ENCODE measurements at regions of chr2 and their contacts with region 1.

Region 1: GRCh38 chr2:54522624-54523281 is 66.6 kb downstream of the SPTBN1 start:
- DNase-seq: peak; percentile 72
- H3K4me3 ChIP-seq: no peak overlapping the region
- H3K27ac ChIP-seq: peak overlapping the region; percentile 49
- H3K4me1 ChIP-seq: peaks cover 46% of the 10 kb centered on the region
- H3K27me3 ChIP-seq: no peaks in the 10 kb centered on the region
- CTCF ChIP-seq: peak; percentile 73 to 78

Region 2: GRCh38 chr2:54106631-54107454 is 415.9 kb before region 1 on chr2:
- CTCF ChIA-PET with region 1: interaction called, 9 read pairs
- dilution Hi-C with region 1: no loop called
- in situ Hi-C with region 1: loop called in 1 of 2 experiments (anchors 25 kb)
- intact Hi-C with region 1: loop called (anchors 2 kb)
- DNase-seq: peak; percentile 43
- H3K4me3 ChIP-seq: no peak overlapping the region
- H3K27ac ChIP-seq: no peak overlapping the region
- H3K4me1 ChIP-seq: peaks cover 33% of the 10 kb centered on the region
- H3K27me3 ChIP-seq: no peaks in the 10 kb centered on the region
- CTCF ChIP-seq: peak; percentile 84 to 90

Region 3: GRCh38 chr2:54206596-54206995 is 316.2 kb before region 1 on chr2:
- CTCF ChIA-PET with region 1: no interaction called
- dilution Hi-C with region 1: no loop called
- in situ Hi-C with region 1: loop called in 1 of 2 experiments (anchors 25 kb)
- intact Hi-C with region 1: no loop called
- DNase-seq: peak; percentile 20
- H3K4me3 ChIP-seq: no peak overlapping the region
- H3K27ac ChIP-seq: no peak overlapping the region
- H3K4me1 ChIP-seq: peaks cover 3% of the 10 kb centered on the region
- H3K27me3 ChIP-seq: no peaks in the 10 kb centered on the region
- CTCF ChIP-seq: peak; percentile 49 to 53

Region 4: GRCh38 chr2:54570925-54571694 is 48.4 kb after region 1 on chr2:
- CTCF ChIA-PET with region 1: no interaction called
- dilution Hi-C with region 1: no loop called
- in situ Hi-C with region 1: no loop called
- intact Hi-C with region 1: loop called (anchors 2 kb)
- DNase-seq: peak; percentile 70
- H3K4me3 ChIP-seq: no peak overlapping the region
- H3K27ac ChIP-seq: peak overlapping the region; percentile 96
- H3K4me1 ChIP-seq: peaks cover 68% of the 10 kb centered on the region
- H3K27me3 ChIP-seq: no peaks in the 10 kb centered on the region
- CTCF ChIP-seq: no peak

Region 5: DNA sequence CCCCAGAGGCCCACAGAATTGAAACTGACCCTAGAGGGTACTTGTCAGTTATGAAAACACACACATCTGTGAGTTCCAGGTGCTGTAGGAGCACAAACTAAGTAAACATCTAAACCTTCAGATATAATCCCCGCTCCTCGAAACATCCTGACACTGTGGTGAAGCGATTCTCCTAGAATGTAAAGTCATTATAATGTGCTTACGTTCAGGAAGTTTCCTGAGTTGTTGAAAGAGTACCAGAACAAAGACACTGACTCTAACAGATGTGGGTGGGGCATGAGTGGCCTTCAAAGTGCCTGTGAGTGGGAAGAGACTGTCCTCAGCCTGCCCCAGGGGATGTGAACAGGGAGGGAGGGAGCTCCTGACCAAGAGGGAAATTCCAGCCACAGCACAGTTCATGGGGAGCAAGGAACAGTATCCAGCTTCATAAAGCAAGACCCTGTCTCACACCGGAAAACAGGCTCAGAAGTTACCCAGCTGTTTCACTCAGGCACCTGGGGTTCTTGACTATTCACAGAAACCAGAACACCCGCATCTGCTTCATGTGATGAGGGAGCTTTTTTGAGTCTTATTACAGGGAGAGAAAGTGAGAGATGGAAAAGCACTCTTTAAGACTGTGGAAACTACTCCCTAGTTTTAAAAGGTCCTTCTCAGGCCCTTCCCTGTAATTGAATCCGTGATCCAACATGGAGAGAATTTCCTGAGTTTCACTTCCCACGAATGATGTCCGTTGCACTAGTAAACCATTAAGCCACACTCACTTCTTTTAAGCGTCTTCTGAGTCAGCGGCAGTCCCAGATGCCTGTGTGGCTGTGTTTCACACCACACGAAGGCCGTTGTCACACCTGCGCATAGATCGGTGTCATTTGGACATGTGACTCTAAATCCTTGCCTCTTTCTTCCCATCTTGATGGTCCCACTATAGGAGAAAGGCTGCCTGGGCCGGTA is 112.1 kb after region 1 on chr2:
- CTCF ChIA-PET with region 1: interaction called, 3 read pairs
- dilution Hi-C with region 1: no loop called
- in situ Hi-C with region 1: no loop called
- intact Hi-C with region 1: loop called (anchors 5 kb)
- DNase-seq: peak; percentile 91
- H3K4me3 ChIP-seq: no peak overlapping the region
- H3K27ac ChIP-seq: peak overlapping the region; percentile 21
- H3K4me1 ChIP-seq: peaks cover 30% of the 10 kb centered on the region
- H3K27me3 ChIP-seq: no peaks in the 10 kb centered on the region
- CTCF ChIP-seq: no peak

Region 6: GRCh38 chr2:54704688-54705605 is 182.2 kb after region 1 on chr2:
- CTCF ChIA-PET with region 1: interaction called, 7 read pairs
- dilution Hi-C with region 1: no loop called
- in situ Hi-C with region 1: loop called in 1 of 2 experiments (anchors 10 kb)
- intact Hi-C with region 1: loop called (anchors 1 kb)
- DNase-seq: peak; percentile 40
- H3K4me3 ChIP-seq: no peak overlapping the region
- H3K27ac ChIP-seq: no peak overlapping the region
- H3K4me1 ChIP-seq: peaks cover 11% of the 10 kb centered on the region
- H3K27me3 ChIP-seq: no peaks in the 10 kb centered on the region
- CTCF ChIP-seq: peak; percentile 35 to 57